Activated B cell treated with CpG ODN at 0.5 μM for 24 hours (primary cell): ENCODE measurements at regions of chr1 and their contacts with region 1.

Region 1: GRCh38 chr1:66446261-66447001 is 87.5 kb upstream of the SGIP1 start:
- DNase-seq: no peak
- ATAC-seq: peak; percentile 69
- H3K4me3 Mint-ChIP-seq: peak overlapping the region; percentile 69
- H3K27ac Mint-ChIP-seq: peak overlapping the region; percentile 93
- H3K4me1 Mint-ChIP-seq: peaks cover 33% of the 10 kb centered on the region
- H3K27me3 Mint-ChIP-seq: no peaks in the 10 kb centered on the region
- CTCF ChIP-seq: no peak

Region 2: DNA sequence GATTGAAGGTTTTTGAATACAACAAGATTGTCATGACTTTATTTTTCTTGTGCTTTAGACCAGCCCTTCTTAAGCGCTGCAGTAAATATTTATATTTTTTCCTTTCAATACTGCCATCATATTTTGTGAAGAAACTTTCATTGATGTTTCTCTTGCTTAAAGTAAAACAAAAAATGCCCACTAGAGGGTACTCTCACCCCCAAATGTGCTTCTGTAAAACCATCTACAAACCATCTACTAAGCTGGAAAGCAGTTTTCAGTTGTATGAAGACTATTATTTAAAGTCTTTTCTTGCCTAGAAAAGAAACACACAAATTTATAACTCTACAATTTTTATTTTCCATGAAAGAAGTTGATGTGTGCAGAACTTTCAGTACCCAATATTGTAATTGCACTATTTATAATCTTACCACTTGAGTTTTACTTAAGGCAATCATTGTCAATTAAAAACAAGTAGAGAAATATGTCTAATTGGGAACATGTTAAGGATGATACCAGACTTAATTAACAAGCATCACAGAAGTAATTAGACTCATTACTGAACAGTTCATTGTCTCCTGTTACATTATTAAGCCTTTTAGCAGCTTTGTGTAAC is 1015.2 kb before region 1 on chr1:
- CTCF ChIA-PET with region 1: interaction called, 9 read pairs
- POLR2A ChIA-PET with region 1: no interaction called
- intact Hi-C with region 1: loop called (anchors 2 kb)
- DNase-seq: no peak
- ATAC-seq: no peak
- H3K4me3 Mint-ChIP-seq: no peak overlapping the region
- H3K27ac Mint-ChIP-seq: no peak overlapping the region
- H3K4me1 Mint-ChIP-seq: no peaks in the 10 kb centered on the region
- H3K27me3 Mint-ChIP-seq: no peaks in the 10 kb centered on the region
- CTCF ChIP-seq: no peak

Region 3: GRCh38 chr1:66242646-66243547 is 203.5 kb before region 1 on chr1:
- CTCF ChIA-PET with region 1: interaction called, 437 read pairs
- POLR2A ChIA-PET with region 1: interaction called, 3 read pairs
- intact Hi-C with region 1: loop called (anchors 2 kb)
- DNase-seq: peak; percentile 46
- ATAC-seq: peak; percentile 92
- H3K4me3 Mint-ChIP-seq: no peak overlapping the region
- H3K27ac Mint-ChIP-seq: no peak overlapping the region
- H3K4me1 Mint-ChIP-seq: peaks cover 8% of the 10 kb centered on the region
- H3K27me3 Mint-ChIP-seq: peaks cover 12% of the 10 kb centered on the region
- CTCF ChIP-seq: no peak

Region 4: GRCh38 chr1:66339944-66340343 is 106.5 kb before region 1 on chr1:
- CTCF ChIA-PET with region 1: interaction called, 30 read pairs
- POLR2A ChIA-PET with region 1: interaction called, 62 read pairs
- intact Hi-C with region 1: loop called (anchors 1 kb)
- DNase-seq: no peak
- ATAC-seq: no peak
- H3K4me3 Mint-ChIP-seq: peak overlapping the region; percentile 64
- H3K27ac Mint-ChIP-seq: peak overlapping the region; percentile 83
- H3K4me1 Mint-ChIP-seq: peaks cover 86% of the 10 kb centered on the region
- H3K27me3 Mint-ChIP-seq: no peaks in the 10 kb centered on the region
- CTCF ChIP-seq: no peak

Region 5: DNA sequence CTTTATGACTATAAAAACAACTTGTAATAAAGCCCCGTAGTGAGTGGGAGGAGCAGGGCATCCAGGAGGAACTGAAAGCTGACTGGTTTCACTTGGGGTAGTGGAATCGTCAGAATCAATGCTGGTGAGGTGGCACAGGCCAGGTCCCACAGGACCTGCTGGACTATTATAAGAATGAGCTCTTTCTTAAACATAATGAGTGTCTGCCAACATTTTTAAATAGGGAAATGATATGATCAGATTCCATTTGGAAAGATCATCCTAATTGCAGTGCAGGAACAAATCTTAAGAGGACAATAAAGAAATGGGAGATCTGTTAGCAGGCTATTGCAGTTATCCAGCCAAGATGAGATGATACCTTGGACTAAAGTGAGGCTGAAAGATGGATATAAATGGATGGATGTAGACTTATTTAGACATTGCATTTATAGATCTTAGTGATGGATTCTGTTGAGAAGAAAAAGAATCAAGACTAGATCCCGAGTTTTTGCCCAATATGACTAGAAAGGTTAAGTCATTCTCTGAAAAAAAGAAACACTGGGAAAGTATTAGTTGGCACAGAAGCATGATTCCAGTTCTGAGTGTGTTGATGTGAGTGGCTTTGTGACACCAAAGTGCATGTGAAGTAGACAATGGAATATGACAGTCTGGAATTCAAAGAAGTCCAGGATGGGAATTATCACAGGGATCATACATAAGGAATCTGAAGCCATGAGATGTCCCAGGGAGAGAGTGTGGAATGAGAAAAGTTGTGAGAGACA is 65.8 kb before region 1 on chr1:
- CTCF ChIA-PET with region 1: interaction called, 182 read pairs
- POLR2A ChIA-PET with region 1: interaction called, 46 read pairs
- intact Hi-C with region 1: loop called (anchors 1 kb)
- DNase-seq: peak; percentile 59
- ATAC-seq: peak; percentile 98
- H3K4me3 Mint-ChIP-seq: peak overlapping the region; percentile 72
- H3K27ac Mint-ChIP-seq: peak overlapping the region; percentile 92
- H3K4me1 Mint-ChIP-seq: peaks cover 87% of the 10 kb centered on the region
- H3K27me3 Mint-ChIP-seq: no peaks in the 10 kb centered on the region
- CTCF ChIP-seq: no peak

Region 6: DNA sequence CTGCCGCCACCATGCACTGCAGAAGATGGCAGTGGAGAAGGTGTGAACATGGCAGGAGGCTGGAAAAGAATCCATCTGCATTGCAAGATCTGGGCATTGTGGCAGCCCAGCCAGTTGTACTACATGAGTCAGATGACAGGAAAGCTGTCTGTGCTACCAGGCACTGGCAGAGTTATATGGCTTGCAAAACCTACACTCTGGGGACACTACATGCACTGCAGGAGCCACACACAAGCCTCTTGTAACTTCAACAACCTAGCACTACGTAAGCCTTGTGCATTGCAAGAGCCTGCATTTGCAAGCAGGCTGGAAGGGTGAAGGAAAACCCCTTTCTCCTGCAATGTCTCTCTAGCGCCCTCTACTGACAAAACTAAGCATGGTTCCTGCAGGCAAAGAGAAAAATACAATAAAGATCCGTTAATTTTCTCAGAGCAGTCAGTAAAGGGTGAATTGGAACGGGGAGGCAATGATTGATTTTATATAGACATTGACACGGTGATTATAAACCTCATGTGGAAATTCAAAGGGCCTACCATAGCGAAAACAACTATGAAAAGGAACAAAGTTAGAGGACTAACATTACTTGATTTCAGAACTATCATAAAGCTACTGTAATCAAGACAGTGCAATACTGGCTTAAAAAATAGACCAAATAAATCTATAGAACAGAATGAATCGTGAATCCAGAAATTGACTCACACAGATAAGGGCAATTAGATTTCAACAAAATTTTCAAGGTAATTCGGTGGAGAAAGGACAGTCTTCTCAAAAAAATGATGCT is 279.6 kb after region 1 on chr1:
- CTCF ChIA-PET with region 1: interaction called, 5 read pairs
- POLR2A ChIA-PET with region 1: no interaction called
- intact Hi-C with region 1: loop called (anchors 2 kb)
- DNase-seq: no peak
- ATAC-seq: peak; percentile 85
- H3K4me3 Mint-ChIP-seq: no peak overlapping the region
- H3K27ac Mint-ChIP-seq: no peak overlapping the region
- H3K4me1 Mint-ChIP-seq: no peaks in the 10 kb centered on the region
- H3K27me3 Mint-ChIP-seq: peaks cover 19% of the 10 kb centered on the region
- CTCF ChIP-seq: peak; percentile 93